ENCODE measurements at regions of chr12 and their contacts with region 1.

Region 1: GRCh38 chr12:57621497-57622292 is 10.5 kb downstream of the ARHGEF25 start:
- DNase-seq: no peak
- H3K4me3 ChIP-seq: peak overlapping the region; percentile 12 to 66 (median 44)
- H3K27ac ChIP-seq: no peak overlapping the region
- H3K4me1 ChIP-seq: peaks cover 11 to 32% (median 19%) of the 10 kb centered on the region in 3 donors
- H3K27me3 ChIP-seq: peaks cover 16 to 100% (median 26%) of the 10 kb centered on the region in 4 donors
- CTCF ChIP-seq: peak; percentile 80 to 90 (median 88)
- POLR2A ChIP-seq: no peak

Region 2: GRCh38 chr12:57135527-57136326 is 486.0 kb before region 1 on chr12:
- intact Hi-C with region 1: no loop called
- DNase-seq: no peak
- H3K4me3 ChIP-seq: peak overlapping the region in 2 of 4 donors; percentile 15 to 52
- H3K27ac ChIP-seq: peak overlapping the region; percentile 63 to 100 (median 98)
- H3K4me1 ChIP-seq: peaks cover 35 to 87% (median 55%) of the 10 kb centered on the region in 3 donors
- H3K27me3 ChIP-seq: no peaks in the 10 kb centered on the region
- CTCF ChIP-seq: no peak
- POLR2A ChIP-seq: no peak

Region 3: DNA sequence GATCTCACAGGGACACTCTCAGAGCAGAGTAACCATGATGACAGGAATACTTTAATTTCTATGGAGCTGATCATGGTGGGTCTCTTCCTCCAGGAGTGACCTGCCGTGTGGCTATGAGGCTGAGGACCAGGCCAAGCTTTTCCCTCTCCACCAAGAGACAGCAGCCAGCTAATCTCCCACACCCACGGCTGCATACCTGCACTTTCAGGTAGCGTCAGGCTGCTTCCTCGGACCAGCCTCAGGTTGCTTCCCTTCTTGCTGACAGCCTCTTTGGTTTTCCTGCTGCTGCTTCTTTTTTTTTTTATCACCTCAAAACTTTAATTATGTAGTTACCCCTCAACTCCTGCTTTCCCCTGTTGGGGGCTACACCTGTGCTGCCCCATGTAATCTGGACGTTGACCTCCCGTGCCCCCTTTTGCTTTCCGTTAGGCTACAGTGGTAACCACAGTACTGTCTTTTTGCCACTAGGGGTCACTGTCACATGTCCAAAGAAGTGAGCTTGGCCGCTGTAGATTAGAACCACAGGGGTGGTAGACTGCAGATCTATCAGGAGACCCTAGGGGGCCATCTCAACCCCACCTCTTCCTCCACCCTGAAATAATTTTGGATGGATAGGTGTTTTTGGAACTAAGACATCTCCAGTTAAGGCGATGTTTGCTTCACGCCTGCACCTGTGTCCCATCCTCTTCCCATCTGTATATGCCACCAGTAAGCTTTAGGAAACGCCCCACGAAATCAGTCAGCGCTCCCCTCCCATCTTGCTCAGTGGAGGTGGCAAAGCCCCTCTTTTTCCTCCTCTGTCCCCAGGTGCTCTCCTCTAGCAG is 38.5 kb before region 1 on chr12:
- intact Hi-C with region 1: loop called (anchors 5 kb)
- DNase-seq: no peak
- H3K4me3 ChIP-seq: no peak overlapping the region
- H3K27ac ChIP-seq: no peak overlapping the region
- H3K4me1 ChIP-seq: no peaks in the 10 kb centered on the region
- H3K27me3 ChIP-seq: peaks cover 0 to 25% (median 0%) of the 10 kb centered on the region in 4 donors
- CTCF ChIP-seq: peak; percentile 91 to 94 (median 92)
- POLR2A ChIP-seq: no peak